CD4-positive, alpha-beta T cell (primary cell): ENCODE measurements at regions of chr15 and their contacts with region 1.

Region 1: DNA sequence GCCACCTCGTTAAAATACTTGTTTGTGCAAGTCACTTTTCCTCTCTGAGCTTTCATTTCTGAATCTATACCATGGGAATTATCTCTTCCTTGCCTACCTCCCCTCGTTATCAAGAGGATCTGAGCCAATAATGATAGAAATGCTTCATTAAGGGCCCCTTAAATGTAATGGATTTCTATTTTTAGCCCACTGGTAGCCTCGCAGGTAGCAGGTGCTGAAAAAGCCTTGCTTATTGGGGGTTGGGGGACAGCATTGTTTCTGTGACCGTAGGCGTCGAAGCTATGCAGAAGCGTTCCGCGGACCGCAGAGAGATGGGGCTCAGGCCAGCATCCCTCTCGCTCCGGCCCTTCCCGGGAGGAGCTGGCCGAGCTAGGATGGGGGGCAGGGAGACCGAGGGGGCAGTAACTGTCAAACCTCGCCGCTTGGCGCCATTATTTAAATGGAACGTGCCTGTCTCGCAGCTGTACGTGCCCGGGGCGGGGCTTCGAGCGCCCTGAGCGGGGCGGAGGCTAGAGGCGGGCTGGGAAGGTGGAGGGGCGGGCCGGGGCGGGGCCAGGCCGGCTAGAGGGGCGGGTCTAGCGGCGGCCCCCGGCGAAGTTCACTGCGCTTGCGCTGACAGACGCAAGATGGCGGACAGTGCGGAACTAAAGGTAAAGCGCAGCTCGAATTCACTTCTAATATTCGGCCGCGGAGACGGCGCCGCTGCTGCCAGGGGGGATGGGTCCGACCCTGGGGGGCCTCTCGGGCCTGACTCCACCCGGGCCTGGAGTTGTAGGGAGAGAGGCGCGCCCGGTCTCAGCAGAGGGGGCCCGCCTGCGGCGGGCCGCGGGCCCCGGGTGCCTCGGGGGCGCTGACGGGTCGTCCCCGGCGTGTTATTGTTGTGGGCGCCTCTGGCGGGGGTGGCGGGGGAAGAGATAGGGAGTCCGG is at the start of gene PIAS1:
- DNase-seq: peak; percentile 87 to 97 (median 93)
- ATAC-seq: peak; percentile 90
- H3K4me3 ChIP-seq: peak within 1 kb of the TSS; percentile 94
- H3K4me3 Mint-ChIP-seq: peak within 1 kb of the TSS; percentile 98
- H3K27ac ChIP-seq: peak within 1 kb of the TSS; percentile 56 to 92
- H3K27ac Mint-ChIP-seq: peak within 1 kb of the TSS; percentile 86
- H3K4me1 ChIP-seq: peaks cover 16% of the 10 kb centered on the region
- H3K4me1 Mint-ChIP-seq: peaks cover 39% of the 10 kb centered on the region
- H3K27me3 ChIP-seq: no peaks in the 10 kb centered on the region
- H3K27me3 Mint-ChIP-seq: no peaks in the 10 kb centered on the region
- CTCF ChIP-seq: no peak
- total RNA-seq, gene PIAS1: 73.1 to 74.8 TPM

Region 2: GRCh38 chr15:67254238-67255175 is 799.5 kb before region 1 on chr15 and contains the starts of genes AAGAB and IQCH:
- CTCF ChIA-PET with region 1: no interaction called
- POLR2A ChIA-PET with region 1: no interaction called
- intact Hi-C with region 1: loop called in 1 of 2 experiments (anchors 10 kb)
- DNase-seq: peak; percentile 86 to 98 (median 96)
- ATAC-seq: peak; percentile 88
- H3K4me3 ChIP-seq: peak within 1 kb of the TSS; percentile 96
- H3K4me3 Mint-ChIP-seq: peak within 1 kb of the TSS; percentile 97
- H3K27ac ChIP-seq: peak within 1 kb of the TSS; percentile 72 to 82
- H3K27ac Mint-ChIP-seq: peak within 1 kb of the TSS; percentile 91
- H3K4me1 ChIP-seq: peaks cover 17% of the 10 kb centered on the region
- H3K4me1 Mint-ChIP-seq: peaks cover 43% of the 10 kb centered on the region
- H3K27me3 ChIP-seq: no peaks in the 10 kb centered on the region
- H3K27me3 Mint-ChIP-seq: no peaks in the 10 kb centered on the region
- CTCF ChIP-seq: no peak
- total RNA-seq, gene AAGAB: 14.2 to 15.6 TPM
- total RNA-seq, gene IQCH: 0.85 to 1.3 TPM

Region 3: GRCh38 chr15:68042156-68042854 is 11.7 kb before region 1 on chr15:
- CTCF ChIA-PET with region 1: no interaction called
- POLR2A ChIA-PET with region 1: no interaction called
- intact Hi-C with region 1: no loop called
- DNase-seq: no peak
- ATAC-seq: no peak
- H3K4me3 ChIP-seq: no peak overlapping the region
- H3K4me3 Mint-ChIP-seq: no peak overlapping the region
- H3K27ac ChIP-seq: no peak overlapping the region
- H3K27ac Mint-ChIP-seq: no peak overlapping the region
- H3K4me1 ChIP-seq: no peaks in the 10 kb centered on the region
- H3K4me1 Mint-ChIP-seq: no peaks in the 10 kb centered on the region
- H3K27me3 ChIP-seq: peaks cover 3 to 5% of the 10 kb centered on the region in 2 experiments
- H3K27me3 Mint-ChIP-seq: peaks cover 18% of the 10 kb centered on the region
- CTCF ChIP-seq: no peak

Region 4: GRCh38 chr15:68085052-68085451 is 31.1 kb after region 1 on chr15:
- CTCF ChIA-PET with region 1: no interaction called
- POLR2A ChIA-PET with region 1: interaction called, 10 read pairs
- intact Hi-C with region 1: no loop called
- DNase-seq: no peak
- ATAC-seq: no peak
- H3K4me3 ChIP-seq: no peak overlapping the region
- H3K4me3 Mint-ChIP-seq: no peak overlapping the region
- H3K27ac ChIP-seq: no peak overlapping the region
- H3K27ac Mint-ChIP-seq: peak overlapping the region; percentile 12
- H3K4me1 ChIP-seq: peaks cover 3% of the 10 kb centered on the region
- H3K4me1 Mint-ChIP-seq: peaks cover 83% of the 10 kb centered on the region
- H3K27me3 ChIP-seq: no peaks in the 10 kb centered on the region
- H3K27me3 Mint-ChIP-seq: no peaks in the 10 kb centered on the region
- CTCF ChIP-seq: no peak

Region 5: DNA sequence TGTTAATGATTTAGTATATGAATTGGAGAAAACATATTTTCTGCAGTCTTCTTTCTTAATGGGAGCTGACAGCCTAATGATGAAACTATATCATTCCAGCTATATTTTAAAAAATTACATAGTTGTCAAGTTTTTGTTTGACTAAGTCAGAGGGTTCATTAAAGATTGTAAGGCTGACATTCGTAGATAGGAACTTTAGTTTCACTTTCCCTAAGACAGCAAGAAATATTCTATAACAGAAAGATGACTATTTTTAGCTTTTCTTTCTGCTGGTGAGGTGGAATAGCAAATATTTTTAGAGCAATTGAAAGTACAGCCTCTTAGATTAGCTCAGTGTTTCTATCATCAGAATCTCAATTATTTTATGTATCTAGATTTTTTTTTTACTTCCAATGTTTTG is 60.4 kb after region 1 on chr15:
- CTCF ChIA-PET with region 1: no interaction called
- POLR2A ChIA-PET with region 1: interaction called, 32 read pairs
- intact Hi-C with region 1: loop called in 1 of 2 experiments (anchors 5 kb)
- DNase-seq: peak in 3 of 14 experiments; percentile 13 to 41 (median 18)
- ATAC-seq: peak; percentile 49
- H3K4me3 ChIP-seq: peak overlapping the region; percentile 18
- H3K4me3 Mint-ChIP-seq: peak overlapping the region; percentile 71
- H3K27ac ChIP-seq: no peak overlapping the region
- H3K27ac Mint-ChIP-seq: peak overlapping the region; percentile 3
- H3K4me1 ChIP-seq: peaks cover 3% of the 10 kb centered on the region
- H3K4me1 Mint-ChIP-seq: peaks cover 80% of the 10 kb centered on the region
- H3K27me3 ChIP-seq: no peaks in the 10 kb centered on the region
- H3K27me3 Mint-ChIP-seq: no peaks in the 10 kb centered on the region
- CTCF ChIP-seq: no peak

Region 6: DNA sequence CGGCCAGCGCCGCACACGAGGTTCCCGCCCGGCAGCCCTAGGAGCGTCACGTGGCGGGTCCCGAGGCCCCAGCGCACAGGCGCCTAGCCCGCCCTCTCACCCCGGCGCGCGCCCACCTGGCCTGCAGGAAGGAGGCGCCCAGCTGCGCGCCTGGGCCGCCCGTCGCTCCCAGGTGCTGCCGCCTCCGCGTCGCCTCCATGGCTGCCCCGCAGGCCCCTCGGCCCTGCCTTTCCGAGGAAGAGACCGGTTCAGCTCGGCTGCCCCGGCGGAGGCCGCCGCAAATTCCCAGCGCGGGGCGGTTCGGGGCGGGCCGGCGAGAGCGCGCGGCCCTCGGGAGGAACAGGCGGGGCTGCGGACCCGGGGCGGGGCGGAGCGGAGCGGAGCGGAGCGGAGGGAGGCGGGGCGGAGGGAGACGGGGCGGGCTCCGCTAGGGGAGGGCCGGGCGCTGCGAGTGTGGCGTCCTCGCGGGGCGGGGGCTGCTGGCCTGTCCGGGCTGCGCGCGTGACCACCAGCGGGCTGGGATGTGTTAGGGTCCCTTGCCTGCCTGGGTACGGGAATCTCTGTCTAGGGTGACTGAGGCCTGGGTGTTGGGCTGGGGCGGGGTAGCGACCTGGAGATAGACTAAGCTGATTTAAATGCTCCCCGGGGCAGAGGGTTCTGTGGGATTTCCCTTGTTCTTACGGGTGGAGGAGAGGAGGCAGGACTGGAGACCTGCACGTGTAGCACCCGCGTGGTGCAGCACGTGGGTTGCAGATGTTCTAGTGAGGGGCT is 175.6 kb after region 1 on chr15 and contains the start of gene CLN6:
- CTCF ChIA-PET with region 1: no interaction called
- POLR2A ChIA-PET with region 1: interaction called, 15 read pairs
- intact Hi-C with region 1: loop called in 1 of 2 experiments (anchors 1 kb)
- DNase-seq: peak; percentile 57 to 93 (median 75)
- ATAC-seq: peak; percentile 82
- H3K4me3 ChIP-seq: peak within 1 kb of the TSS; percentile 88
- H3K4me3 Mint-ChIP-seq: peak within 1 kb of the TSS; percentile 92
- H3K27ac ChIP-seq: peak within 1 kb of the TSS in 1 of 2 donors; percentile 34
- H3K27ac Mint-ChIP-seq: peak within 1 kb of the TSS; percentile 73
- H3K4me1 ChIP-seq: peaks cover 29% of the 10 kb centered on the region
- H3K4me1 Mint-ChIP-seq: peaks cover 28% of the 10 kb centered on the region
- H3K27me3 ChIP-seq: no peaks in the 10 kb centered on the region
- H3K27me3 Mint-ChIP-seq: no peaks in the 10 kb centered on the region
- CTCF ChIP-seq: no peak
- total RNA-seq, gene CLN6: 8.0 to 8.1 TPM

Region 7: DNA sequence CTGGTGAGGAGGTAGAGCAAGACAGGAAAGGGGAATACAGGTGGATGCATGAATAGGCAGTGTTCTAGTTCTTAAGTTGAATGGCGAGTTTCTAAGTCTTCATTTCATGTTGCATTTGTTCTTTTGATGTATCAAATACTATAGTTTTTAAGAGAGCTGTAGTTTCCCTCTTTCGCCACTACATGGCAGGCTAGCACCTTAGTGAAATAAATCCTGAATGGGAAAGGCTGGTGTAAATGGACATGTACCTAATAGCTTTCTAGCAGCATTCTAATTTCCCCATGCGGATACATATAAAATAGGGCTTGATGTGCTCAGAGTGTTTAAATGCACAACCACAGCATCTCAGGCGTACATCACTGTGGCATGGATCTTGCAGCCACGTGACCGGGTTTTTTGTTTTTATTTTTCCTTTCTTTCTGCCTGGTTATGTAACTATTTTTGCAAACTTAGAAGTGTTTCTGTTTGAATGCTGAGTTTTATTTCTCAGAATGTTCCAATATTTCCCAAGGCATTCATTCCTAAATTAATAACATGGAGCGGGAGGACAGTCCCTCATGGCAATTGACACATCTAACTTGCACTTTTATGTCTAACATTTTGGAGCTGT is 199.1 kb after region 1 on chr15:
- CTCF ChIA-PET with region 1: no interaction called
- POLR2A ChIA-PET with region 1: no interaction called
- intact Hi-C with region 1: no loop called
- DNase-seq: peak in 6 of 14 experiments; percentile 16 to 76 (median 60)
- ATAC-seq: peak; percentile 75
- H3K4me3 ChIP-seq: no peak overlapping the region
- H3K4me3 Mint-ChIP-seq: peak overlapping the region; percentile 44
- H3K27ac ChIP-seq: no peak overlapping the region
- H3K27ac Mint-ChIP-seq: no peak overlapping the region
- H3K4me1 ChIP-seq: peaks cover 9% of the 10 kb centered on the region
- H3K4me1 Mint-ChIP-seq: peaks cover 7% of the 10 kb centered on the region
- H3K27me3 ChIP-seq: no peaks in the 10 kb centered on the region
- H3K27me3 Mint-ChIP-seq: no peaks in the 10 kb centered on the region
- CTCF ChIP-seq: peak; percentile 89